ENCODE measurements at regions of chr18 and their contacts with region 1.

Region 1: DNA sequence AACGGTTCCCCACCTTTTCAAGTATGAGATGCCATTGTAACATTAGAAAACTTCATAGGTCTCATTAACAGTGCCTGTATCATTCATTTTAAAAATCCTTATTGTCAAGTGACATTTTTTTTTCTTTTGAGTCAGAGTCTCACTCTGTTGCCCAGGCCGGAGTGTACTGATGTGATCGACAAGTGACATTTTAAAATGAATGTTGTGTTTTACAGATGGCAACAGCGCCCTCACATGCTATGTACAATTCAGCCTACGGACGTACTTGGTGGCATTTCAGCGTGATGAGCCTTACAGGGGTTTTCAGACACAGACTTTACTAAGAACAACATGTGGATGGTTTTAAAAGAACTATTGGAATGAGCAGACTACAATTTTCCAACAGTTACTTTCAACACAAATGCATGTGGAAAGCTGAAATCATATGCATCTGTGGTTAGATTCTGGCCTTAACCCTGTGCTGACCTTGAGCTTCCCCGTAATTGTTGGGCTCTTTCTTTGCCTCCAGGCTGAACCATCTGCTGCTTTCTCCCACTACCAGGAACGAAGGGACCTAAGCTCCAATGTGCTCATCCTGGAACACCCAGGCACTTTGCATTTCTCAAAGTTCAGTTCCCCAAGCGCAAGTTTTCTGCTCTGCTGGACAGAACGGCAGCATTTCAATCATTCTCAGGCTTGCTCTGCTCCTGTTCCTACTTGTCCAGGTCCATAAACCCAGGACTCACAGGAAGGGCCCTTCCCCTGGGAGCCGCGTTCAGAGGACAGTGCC is 119.9 kb upstream of the NDUFV2 start:
- DNase-seq: peak; percentile 61 to 67
- H3K4me3 ChIP-seq: no peak overlapping the region
- H3K4me3 Mint-ChIP-seq: no peak overlapping the region
- H3K27ac Mint-ChIP-seq: no peak overlapping the region
- H3K4me1 ChIP-seq: peaks cover 18% of the 10 kb centered on the region
- H3K4me1 Mint-ChIP-seq: peaks cover 15% of the 10 kb centered on the region
- H3K27me3 ChIP-seq: no peaks in the 10 kb centered on the region
- H3K27me3 Mint-ChIP-seq: no peaks in the 10 kb centered on the region
- CTCF ChIP-seq: peak; percentile 45 to 59

Region 2: GRCh38 chr18:8882632-8883408 is 99.8 kb before region 1 on chr18:
- CTCF ChIA-PET with region 1: no interaction called
- POLR2A ChIA-PET with region 1: no interaction called
- intact Hi-C with region 1: loop called (anchors 1 kb)
- DNase-seq: peak; percentile 54 to 59
- H3K4me3 ChIP-seq: no peak overlapping the region
- H3K4me3 Mint-ChIP-seq: no peak overlapping the region
- H3K27ac Mint-ChIP-seq: no peak overlapping the region
- H3K4me1 ChIP-seq: no peaks in the 10 kb centered on the region
- H3K4me1 Mint-ChIP-seq: no peaks in the 10 kb centered on the region
- H3K27me3 ChIP-seq: no peaks in the 10 kb centered on the region
- H3K27me3 Mint-ChIP-seq: no peaks in the 10 kb centered on the region
- CTCF ChIP-seq: peak in 1 of 2 experiments; percentile 38

Region 3: DNA sequence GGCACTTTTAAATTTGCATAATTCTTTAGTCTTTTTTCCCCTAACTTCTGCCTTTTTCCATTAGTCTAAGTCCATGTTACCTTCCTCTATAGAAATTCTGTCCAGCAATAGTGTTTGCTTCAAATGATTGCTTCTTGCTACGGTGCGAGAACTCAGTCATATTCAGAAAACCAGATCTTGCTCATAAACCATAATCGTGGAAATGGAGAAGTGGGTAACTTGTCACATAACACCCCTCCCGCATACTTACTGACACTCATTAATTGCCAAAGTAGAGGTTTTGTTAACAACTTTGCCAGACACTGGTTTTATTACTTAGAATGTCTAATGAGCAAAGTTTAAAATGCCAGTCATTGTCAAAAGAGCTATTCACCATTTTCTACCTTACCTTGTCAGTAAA is 257.7 kb after region 1 on chr18:
- CTCF ChIA-PET with region 1: no interaction called
- POLR2A ChIA-PET with region 1: no interaction called
- intact Hi-C with region 1: no loop called
- DNase-seq: no peak
- H3K4me3 ChIP-seq: no peak overlapping the region
- H3K4me3 Mint-ChIP-seq: no peak overlapping the region
- H3K27ac Mint-ChIP-seq: no peak overlapping the region
- H3K4me1 ChIP-seq: no peaks in the 10 kb centered on the region
- H3K4me1 Mint-ChIP-seq: peaks cover 8% of the 10 kb centered on the region
- H3K27me3 ChIP-seq: no peaks in the 10 kb centered on the region
- H3K27me3 Mint-ChIP-seq: no peaks in the 10 kb centered on the region
- CTCF ChIP-seq: no peak